ENCODE measurements at regions of chr20 and their contacts with region 1.

Region 1: GRCh38 chr20:46089417-46090388 is at the start of gene NCOA5:
- DNase-seq: peak; percentile 78
- H3K4me3 ChIP-seq: peak within 1 kb of the TSS; percentile 92
- CTCF ChIP-seq: peak; percentile 35

Region 2: GRCh38 chr20:46078954-46079353 is 10.7 kb before region 1 on chr20:
- CTCF ChIA-PET with region 1: interaction called, 12 read pairs
- POLR2A ChIA-PET with region 1: no interaction called
- DNase-seq: no peak
- H3K4me3 ChIP-seq: no peak overlapping the region
- CTCF ChIP-seq: no peak

Region 3: DNA sequence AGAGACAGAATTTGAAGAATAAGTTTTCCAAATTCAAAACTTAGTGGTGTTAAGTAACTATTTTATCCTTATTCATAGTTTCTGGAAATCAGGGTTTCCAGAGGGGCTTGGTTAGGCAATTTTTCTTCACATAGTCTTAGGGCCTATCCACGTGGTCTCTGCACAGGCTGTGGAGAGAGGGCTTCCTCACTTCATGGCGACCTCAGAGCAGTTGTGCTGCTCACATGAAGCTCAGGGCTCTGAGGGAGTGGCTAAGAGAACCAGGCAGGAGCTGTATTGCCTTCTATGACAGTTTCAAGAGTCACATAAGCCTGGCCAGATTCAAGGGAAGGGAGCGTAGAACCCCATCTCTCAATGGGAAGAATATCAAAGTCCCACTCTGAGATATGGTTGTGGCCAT is 14.6 kb after region 1 on chr20:
- CTCF ChIA-PET with region 1: no interaction called
- POLR2A ChIA-PET with region 1: no interaction called
- DNase-seq: no peak
- H3K4me3 ChIP-seq: no peak overlapping the region
- CTCF ChIP-seq: no peak

Region 4: DNA sequence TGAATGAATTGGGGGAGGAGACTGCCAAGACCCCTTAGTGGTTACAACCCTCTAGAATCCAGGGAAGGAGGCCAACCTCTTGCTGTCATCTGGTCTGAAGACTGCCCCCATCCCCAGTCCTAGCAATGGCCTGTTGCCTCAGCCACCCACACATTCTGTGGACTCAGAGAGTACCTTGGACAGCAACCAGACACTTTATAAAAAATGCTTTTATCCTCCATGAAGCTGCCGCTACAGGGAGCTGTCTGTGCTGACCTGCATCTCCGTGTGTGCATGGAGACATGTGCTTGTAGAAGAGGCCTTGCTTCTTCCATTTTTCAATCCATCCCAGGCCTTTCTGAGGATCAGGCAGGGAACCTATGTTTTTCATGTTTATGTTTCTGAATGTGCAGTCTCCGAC is 203.4 kb after region 1 on chr20:
- CTCF ChIA-PET with region 1: no interaction called
- POLR2A ChIA-PET with region 1: no interaction called
- DNase-seq: no peak
- H3K4me3 ChIP-seq: no peak overlapping the region
- CTCF ChIP-seq: no peak

Region 5: DNA sequence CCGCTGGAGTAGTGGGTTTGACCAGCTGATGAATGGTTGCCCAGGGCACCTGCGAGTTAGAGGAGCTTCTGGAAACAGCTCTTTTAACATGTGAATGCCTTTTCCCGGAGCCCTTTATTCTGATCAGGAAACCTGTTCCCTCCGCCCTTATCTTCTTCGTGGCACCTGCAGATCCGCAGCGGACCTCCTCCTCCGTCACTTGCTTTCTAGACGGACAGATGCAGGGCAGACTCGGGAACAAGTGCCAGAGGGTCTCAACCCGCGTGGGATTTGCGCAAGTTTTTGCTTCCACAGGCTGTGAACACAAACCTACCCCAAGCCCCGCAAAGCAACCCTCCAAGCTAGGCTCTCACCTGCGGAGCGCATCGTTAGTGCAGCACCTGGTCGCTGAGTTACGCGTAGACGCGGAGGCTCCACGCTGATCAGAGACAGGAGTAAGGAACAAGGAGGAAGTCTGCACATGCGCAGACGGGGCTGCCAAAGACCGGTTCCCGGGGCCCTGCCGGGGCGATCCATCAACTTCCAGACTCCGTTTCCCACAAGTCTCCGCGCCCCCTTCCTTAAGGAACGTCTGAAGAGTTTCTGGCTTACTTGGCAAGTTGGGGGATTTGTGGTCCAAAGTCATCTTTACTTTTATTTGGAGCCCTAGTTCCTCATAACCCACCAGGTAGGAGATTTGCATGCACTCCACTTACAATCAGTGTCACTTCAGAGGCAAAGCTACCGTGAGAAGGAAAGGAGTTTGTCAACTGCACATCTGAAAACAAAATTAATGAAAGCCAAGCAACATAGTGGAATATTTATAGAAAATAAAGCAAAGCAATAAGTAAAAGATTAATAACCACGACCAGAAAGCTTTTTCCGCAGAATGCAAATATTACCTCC is 369.4 kb after region 1 on chr20:
- CTCF ChIA-PET with region 1: no interaction called
- POLR2A ChIA-PET with region 1: no interaction called
- DNase-seq: no peak
- H3K4me3 ChIP-seq: no peak overlapping the region
- CTCF ChIP-seq: no peak

Measured in AG04449 (cell line).